ENCODE measurements at regions of chr14 and their contacts with region 1.

Region 1: DNA sequence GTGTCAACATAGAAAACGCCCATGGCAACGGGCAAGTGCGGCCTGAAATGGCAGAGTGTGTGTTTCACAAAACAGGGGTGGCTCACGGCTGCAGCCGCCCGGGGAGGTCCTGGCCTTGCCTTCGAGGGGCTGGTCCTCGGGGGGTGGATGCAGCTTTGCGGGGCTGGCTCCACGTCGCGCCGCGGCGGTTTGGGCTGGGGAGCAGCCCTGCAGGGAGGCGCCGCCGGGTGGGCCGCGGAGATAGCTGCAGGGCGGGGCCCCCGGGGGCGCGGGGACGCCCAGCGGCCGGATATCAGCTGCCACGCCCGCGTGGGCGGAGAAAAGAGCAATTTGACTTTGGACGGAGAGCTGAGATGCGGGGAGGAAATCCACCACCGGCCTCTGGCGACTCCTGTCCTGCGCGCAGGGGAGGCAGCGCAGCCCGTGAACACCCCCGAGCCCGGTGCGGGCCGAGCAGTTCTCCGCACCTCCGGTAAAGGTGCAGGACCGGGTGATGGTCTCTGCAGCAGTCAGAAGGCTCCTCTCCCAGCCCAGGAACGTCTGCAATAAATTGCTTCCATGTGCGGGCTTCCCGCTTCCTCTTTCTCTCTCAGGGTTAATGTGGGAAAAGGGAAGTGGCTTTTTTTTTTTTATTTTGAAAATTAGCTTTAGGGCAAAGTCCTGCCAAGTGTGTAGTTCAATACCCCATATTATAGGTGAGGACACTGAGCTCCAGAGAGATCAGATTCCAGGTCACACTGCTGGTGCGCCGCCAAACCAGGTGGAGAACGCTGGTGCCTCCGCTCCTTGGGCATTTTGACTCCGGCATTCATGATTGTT is 110.5 kb downstream of the ARF6 start:
- DNase-seq: peak; percentile 74 to 96
- H3K4me3 ChIP-seq: peak overlapping the region; percentile 19
- CTCF ChIP-seq: no peak
- POLR2A ChIP-seq: no peak

Region 2: GRCh38 chr14:49867831-49868723 is 135.3 kb before region 1 on chr14:
- intact Hi-C with region 1: loop called (anchors 5 kb)
- DNase-seq: peak; percentile 96 to 100
- H3K4me3 ChIP-seq: peak overlapping the region; percentile 32
- CTCF ChIP-seq: no peak
- POLR2A ChIP-seq: peak in 1 of 2 donors; percentile 48

Region 3: GRCh38 chr14:49879683-49880204 is 123.7 kb before region 1 on chr14:
- intact Hi-C with region 1: no loop called
- DNase-seq: no peak
- H3K4me3 ChIP-seq: no peak overlapping the region
- CTCF ChIP-seq: no peak
- POLR2A ChIP-seq: no peak

Region 4: DNA sequence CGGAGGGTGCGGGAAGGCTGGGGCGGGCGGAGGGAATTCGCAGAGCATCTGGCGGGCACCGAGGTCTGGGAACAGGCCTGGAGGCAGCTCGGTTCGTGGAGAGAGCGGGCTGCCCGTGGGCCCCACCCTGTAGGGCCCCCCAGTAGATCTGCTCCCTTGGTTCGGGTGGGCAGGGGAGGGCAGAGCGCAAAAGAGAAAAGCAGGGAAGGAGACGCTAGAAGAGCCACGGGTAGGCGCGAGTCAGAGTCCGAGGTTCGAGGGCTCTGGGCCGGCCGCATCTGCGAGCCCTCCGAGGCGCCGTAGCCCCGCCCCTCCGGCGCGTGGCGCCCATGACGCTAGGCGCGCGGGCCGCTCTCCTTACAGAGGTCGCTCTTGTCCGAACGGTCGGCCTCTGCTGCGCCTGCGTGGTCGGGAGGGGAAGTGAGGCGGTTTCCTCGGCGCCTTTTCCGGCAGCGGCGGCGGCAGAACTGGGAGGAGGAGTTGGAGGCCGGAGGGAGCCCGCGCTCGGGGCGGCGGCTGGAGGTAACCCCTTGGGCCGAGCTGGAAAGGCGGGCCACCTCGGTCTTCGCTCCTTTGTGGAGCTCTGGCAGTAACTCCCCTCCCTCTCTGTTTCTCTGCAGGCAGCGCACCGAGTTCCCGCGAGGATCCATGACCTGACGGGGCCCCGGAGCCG is 110.7 kb before region 1 on chr14 and contains the start of gene ARF6:
- intact Hi-C with region 1: loop called (anchors 10 kb)
- DNase-seq: peak; percentile 97 to 100
- H3K4me3 ChIP-seq: peak within 1 kb of the TSS; percentile 100
- CTCF ChIP-seq: no peak
- POLR2A ChIP-seq: peak in 1 of 2 donors; percentile 77
- total RNA-seq, gene ARF6: 102 to 128 (median 121) TPM

Region 5: GRCh38 chr14:49908432-49908781 is 95.0 kb before region 1 on chr14:
- intact Hi-C with region 1: no loop called
- DNase-seq: no peak
- H3K4me3 ChIP-seq: no peak overlapping the region
- CTCF ChIP-seq: no peak
- POLR2A ChIP-seq: no peak

Measured in lower leg skin (tissue), 4 donors.